GM10248 (cell line): ENCODE measurements at regions of chr1 and their contacts with region 1.

Region 1: GRCh38 chr1:116139592-116140134 is 28.5 kb downstream of the MAB21L3 start:
- DNase-seq: no peak
- CTCF ChIP-seq: no peak

Region 2: GRCh38 chr1:116075577-116076380 is 63.9 kb before region 1 on chr1:
- CTCF ChIA-PET with region 1: no interaction called
- POLR2A ChIA-PET with region 1: no interaction called
- DNase-seq: no peak
- CTCF ChIP-seq: no peak

Region 3: DNA sequence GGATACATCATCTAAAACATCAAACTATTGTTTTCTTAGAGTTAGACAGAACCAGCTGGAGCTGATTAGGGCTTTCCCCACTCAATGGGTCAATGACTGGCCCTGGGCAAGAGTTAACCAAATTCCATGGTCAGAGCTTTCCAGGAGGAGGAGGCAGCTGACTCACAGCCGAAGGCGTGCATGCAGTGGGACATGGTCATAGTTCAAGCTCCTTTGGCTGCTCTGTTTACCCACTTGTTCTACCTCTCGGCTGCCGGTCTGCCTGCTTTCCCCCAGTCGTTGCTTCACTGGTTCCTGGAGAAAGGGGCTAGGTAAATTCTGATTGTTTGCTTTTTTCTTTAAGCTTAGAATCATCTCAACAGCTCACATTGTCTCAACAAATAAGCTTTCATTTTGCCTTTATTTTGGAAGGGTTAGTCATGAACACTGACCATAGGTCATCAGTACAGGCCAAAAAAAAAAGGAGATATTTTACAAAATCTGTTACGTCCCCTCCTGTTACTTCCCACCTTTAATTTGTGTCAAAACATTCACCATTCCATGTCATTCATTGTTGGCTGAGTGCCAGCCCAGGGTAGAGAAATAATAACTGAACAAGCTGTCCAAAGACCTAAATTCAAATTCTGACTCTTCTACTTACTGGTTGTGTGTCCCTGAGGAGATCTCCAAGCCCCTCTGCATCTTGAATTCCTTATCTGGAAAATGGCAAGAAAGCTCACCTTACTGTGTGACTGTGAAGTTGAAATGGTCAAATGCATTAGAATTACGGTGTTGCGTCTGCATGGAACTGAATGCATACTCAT is 16.5 kb before region 1 on chr1:
- CTCF ChIA-PET with region 1: interaction called, 30 read pairs
- POLR2A ChIA-PET with region 1: no interaction called
- DNase-seq: no peak
- CTCF ChIP-seq: no peak

Region 4: GRCh38 chr1:116159177-116159576 is 19.5 kb after region 1 on chr1:
- CTCF ChIA-PET with region 1: interaction called, 131 read pairs
- POLR2A ChIA-PET with region 1: no interaction called
- DNase-seq: no peak
- CTCF ChIP-seq: no peak

Region 5: GRCh38 chr1:116360429-116361173 is 220.9 kb after region 1 on chr1:
- CTCF ChIA-PET with region 1: interaction called, 14 read pairs
- POLR2A ChIA-PET with region 1: no interaction called
- DNase-seq: peak; percentile 32
- CTCF ChIP-seq: peak; percentile 12

Region 6: GRCh38 chr1:116514708-116515525 is 375.3 kb after region 1 on chr1:
- CTCF ChIA-PET with region 1: interaction called, 11 read pairs
- POLR2A ChIA-PET with region 1: no interaction called
- DNase-seq: peak; percentile 63
- CTCF ChIP-seq: no peak